CD14-positive monocyte (primary cell): ENCODE measurements at regions of chr6 and their contacts with region 1.

Region 1: DNA sequence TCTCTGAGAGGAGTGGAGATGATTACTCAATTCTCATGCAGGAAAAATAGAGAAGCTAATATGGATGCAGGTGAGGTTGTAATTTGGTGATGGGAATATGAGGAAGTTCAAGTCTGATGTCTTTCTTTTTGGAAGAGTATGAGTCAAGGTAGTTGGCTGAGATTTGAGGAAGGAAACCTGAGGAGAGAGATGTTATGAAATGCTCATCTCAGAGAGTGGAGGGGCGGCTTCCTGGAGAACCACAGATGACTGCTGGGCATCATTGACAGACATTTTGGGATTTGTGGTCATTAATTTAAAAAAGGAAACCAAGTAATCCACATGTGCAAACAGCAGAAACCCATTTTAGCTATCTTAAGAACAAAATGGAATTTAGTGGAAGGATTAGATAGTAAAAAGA is 72.5 kb upstream of the UST start:
- DNase-seq: peak; percentile 42 to 78 (median 57)
- H3K4me3 ChIP-seq: no peak overlapping the region
- H3K4me3 Mint-ChIP-seq: no peak overlapping the region
- H3K27ac ChIP-seq: no peak overlapping the region
- H3K27ac Mint-ChIP-seq: peak overlapping the region in 1 of 7 donors; percentile 37
- H3K4me1 ChIP-seq: peaks cover 38 to 39% of the 10 kb centered on the region in 2 donors
- H3K4me1 Mint-ChIP-seq: peaks cover 34% of the 10 kb centered on the region
- H3K27me3 ChIP-seq: no peaks in the 10 kb centered on the region
- H3K27me3 Mint-ChIP-seq: peaks cover 0 to 9% (median 4%) of the 10 kb centered on the region in 3 donors
- CTCF ChIP-seq: no peak

Region 2: GRCh38 chr6:148658701-148659100 is 15.6 kb before region 1 on chr6:
- intact Hi-C with region 1: loop called in 1 of 2 experiments (anchors 2 kb)
- DNase-seq: no peak
- H3K4me3 ChIP-seq: no peak overlapping the region
- H3K4me3 Mint-ChIP-seq: no peak overlapping the region
- H3K27ac ChIP-seq: no peak overlapping the region
- H3K27ac Mint-ChIP-seq: peak overlapping the region in 3 of 7 donors; percentile 20 to 56 (median 21)
- H3K4me1 ChIP-seq: peaks cover 19 to 20% of the 10 kb centered on the region in 2 donors
- H3K4me1 Mint-ChIP-seq: peaks cover 20% of the 10 kb centered on the region
- H3K27me3 ChIP-seq: no peaks in the 10 kb centered on the region
- H3K27me3 Mint-ChIP-seq: peaks cover 0 to 2% (median 0%) of the 10 kb centered on the region in 3 donors
- CTCF ChIP-seq: no peak

Region 3: GRCh38 chr6:148711833-148712654 is 37.7 kb after region 1 on chr6:
- intact Hi-C with region 1: no loop called
- DNase-seq: no peak
- H3K4me3 ChIP-seq: no peak overlapping the region
- H3K4me3 Mint-ChIP-seq: no peak overlapping the region
- H3K27ac ChIP-seq: no peak overlapping the region
- H3K27ac Mint-ChIP-seq: no peak overlapping the region
- H3K4me1 ChIP-seq: no peaks in the 10 kb centered on the region
- H3K4me1 Mint-ChIP-seq: no peaks in the 10 kb centered on the region
- H3K27me3 ChIP-seq: no peaks in the 10 kb centered on the region
- H3K27me3 Mint-ChIP-seq: peaks cover 0 to 3% (median 1%) of the 10 kb centered on the region in 3 donors
- CTCF ChIP-seq: no peak

Region 4: GRCh38 chr6:148846778-148847761 is 172.8 kb after region 1 on chr6:
- intact Hi-C with region 1: no loop called
- DNase-seq: no peak
- H3K4me3 ChIP-seq: no peak overlapping the region
- H3K4me3 Mint-ChIP-seq: no peak overlapping the region
- H3K27ac ChIP-seq: no peak overlapping the region
- H3K27ac Mint-ChIP-seq: no peak overlapping the region
- H3K4me1 ChIP-seq: no peaks in the 10 kb centered on the region
- H3K4me1 Mint-ChIP-seq: no peaks in the 10 kb centered on the region
- H3K27me3 ChIP-seq: no peaks in the 10 kb centered on the region
- H3K27me3 Mint-ChIP-seq: peaks cover 0 to 3% (median 0%) of the 10 kb centered on the region in 3 donors
- CTCF ChIP-seq: no peak